ENCODE measurements at regions of chr3 and their contacts with region 1.

Region 1: DNA sequence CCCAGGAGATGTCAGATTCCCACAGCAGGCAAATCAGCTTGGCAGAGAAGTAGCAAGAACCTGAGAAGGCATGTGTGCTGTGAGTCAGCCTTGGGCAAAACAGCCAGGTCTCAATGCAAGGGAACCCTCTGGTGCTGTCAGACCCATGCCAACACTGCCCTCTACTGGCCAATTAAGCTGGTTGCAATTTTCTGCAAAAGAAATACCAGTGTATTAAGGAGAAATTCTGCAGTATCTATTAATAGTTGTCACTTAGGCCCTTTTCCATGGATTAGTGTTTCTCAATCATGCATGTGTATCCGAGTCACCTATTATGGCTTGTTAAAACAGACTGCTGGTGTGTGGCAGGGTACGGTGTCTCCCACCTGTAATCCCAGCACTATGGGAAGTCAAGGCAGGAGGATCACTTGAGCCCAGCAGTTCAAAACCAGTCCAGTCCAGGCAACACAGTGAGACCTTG is 26.2 kb downstream of the MAP4 start:
- DNase-seq: peak; percentile 54 to 92
- H3K4me3 ChIP-seq: no peak overlapping the region
- H3K27ac ChIP-seq: peak overlapping the region in 1 of 2 donors; percentile 48
- H3K4me1 ChIP-seq: peaks cover 4 to 21% of the 10 kb centered on the region in 2 donors
- H3K27me3 ChIP-seq: no peaks in the 10 kb centered on the region
- CTCF ChIP-seq: peak; percentile 84 to 93 (median 89)

Region 2: DNA sequence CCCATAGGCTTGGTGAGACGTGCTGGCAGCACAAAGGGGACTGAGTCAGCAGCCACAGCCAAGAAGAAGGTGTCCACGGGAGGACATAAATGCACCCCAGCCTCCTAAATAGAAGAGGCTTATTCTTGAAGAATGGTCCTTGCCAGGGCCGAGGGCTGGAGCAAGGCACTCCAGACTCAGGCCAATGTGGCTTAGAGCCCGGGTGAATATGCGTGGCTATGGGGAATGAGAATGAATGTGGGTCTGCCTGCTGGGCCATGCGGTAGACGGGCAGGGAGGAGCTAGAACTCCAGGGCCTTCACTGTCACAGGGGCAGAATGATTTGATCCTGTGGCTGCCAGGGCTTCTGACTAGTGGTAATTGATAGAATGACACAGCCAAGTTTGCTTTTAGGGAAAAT is 153.0 kb before region 1 on chr3:
- intact Hi-C with region 1: loop called (anchors 2 kb)
- DNase-seq: no peak
- H3K4me3 ChIP-seq: no peak overlapping the region
- H3K27ac ChIP-seq: peak overlapping the region; percentile 14 to 43
- H3K4me1 ChIP-seq: no peaks in the 10 kb centered on the region
- H3K27me3 ChIP-seq: no peaks in the 10 kb centered on the region
- CTCF ChIP-seq: no peak

Region 3: GRCh38 chr3:47899495-47900125 is 90.4 kb before region 1 on chr3:
- intact Hi-C with region 1: loop called (anchors 5 kb)
- DNase-seq: no peak
- H3K4me3 ChIP-seq: no peak overlapping the region
- H3K27ac ChIP-seq: peak overlapping the region in 1 of 2 donors; percentile 22
- H3K4me1 ChIP-seq: peaks cover 0 to 17% of the 10 kb centered on the region in 2 donors
- H3K27me3 ChIP-seq: no peaks in the 10 kb centered on the region
- CTCF ChIP-seq: no peak

Region 4: GRCh38 chr3:48112813-48113212 is 122.8 kb after region 1 on chr3:
- intact Hi-C with region 1: no loop called
- DNase-seq: no peak
- H3K4me3 ChIP-seq: peak overlapping the region in 1 of 2 donors; percentile 40
- H3K27ac ChIP-seq: peak overlapping the region; percentile 70 to 83
- H3K4me1 ChIP-seq: peaks cover 5 to 16% of the 10 kb centered on the region in 2 donors
- H3K27me3 ChIP-seq: no peaks in the 10 kb centered on the region
- CTCF ChIP-seq: no peak

Region 5: DNA sequence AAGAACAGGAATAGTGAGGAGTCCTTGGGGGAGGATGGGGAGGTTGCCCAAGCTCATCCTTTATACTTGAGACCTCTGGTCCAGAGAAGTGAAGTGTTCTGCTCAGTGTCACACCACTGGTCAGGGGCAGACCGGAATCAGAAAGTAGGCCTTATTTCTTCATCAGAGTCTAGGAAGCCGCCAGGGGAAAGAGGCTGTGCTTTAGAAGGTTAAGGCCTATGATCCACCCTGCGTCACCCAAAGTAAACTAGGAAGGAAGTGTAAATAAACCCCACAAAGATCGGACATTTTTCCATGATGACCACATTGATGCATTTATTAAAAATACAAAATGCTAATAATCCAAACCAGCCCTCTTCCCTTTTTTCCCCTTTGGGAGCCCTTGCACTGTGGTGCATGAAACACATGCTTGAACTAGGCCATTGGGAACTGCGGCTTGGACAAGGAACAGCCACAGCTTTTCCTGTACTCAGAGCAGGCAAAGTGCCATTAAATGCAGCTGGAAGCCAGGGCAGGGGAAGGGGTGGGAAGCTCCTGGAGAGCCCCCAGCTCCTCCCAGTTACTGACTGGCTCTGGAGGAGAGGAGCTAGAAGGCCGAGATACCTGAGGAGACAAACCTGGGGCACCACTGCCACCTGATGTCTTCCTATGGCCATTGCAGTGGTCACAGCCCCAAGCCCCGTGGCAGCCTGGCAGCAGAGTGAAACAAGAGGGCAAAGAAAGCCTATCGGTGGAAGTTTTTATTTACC is 161.2 kb after region 1 on chr3:
- intact Hi-C with region 1: loop called (anchors 2 kb)
- DNase-seq: peak; percentile 26 to 87
- H3K4me3 ChIP-seq: no peak overlapping the region
- H3K27ac ChIP-seq: peak overlapping the region in 1 of 2 donors; percentile 74
- H3K4me1 ChIP-seq: peaks cover 0 to 3% of the 10 kb centered on the region in 2 donors
- H3K27me3 ChIP-seq: no peaks in the 10 kb centered on the region
- CTCF ChIP-seq: peak; percentile 84 to 90 (median 88)